Activated T-helper 2 cell treated with anti-CD3 and anti-CD28 coated beads, Interferon-gamma antibody, Interleukin-2, Interleukin-4, amounts not matched to agents 10 μg/mL and 5 μg/mL and 100 μg/mL, durations not matched to agents 14 hours and 24 hours and 36 hours (primary cell): ENCODE measurements at regions of chr9 and their contacts with region 1.

Region 1: GRCh38 chr9:87950765-87951488 is 23.4 kb downstream of the CDK20 start:
- DNase-seq: no peak
- H3K4me3 Mint-ChIP-seq: no peak overlapping the region
- H3K27ac Mint-ChIP-seq: no peak overlapping the region
- H3K4me1 Mint-ChIP-seq: peaks cover 7% of the 10 kb centered on the region
- H3K27me3 Mint-ChIP-seq: peaks cover 32% of the 10 kb centered on the region

Region 2: DNA sequence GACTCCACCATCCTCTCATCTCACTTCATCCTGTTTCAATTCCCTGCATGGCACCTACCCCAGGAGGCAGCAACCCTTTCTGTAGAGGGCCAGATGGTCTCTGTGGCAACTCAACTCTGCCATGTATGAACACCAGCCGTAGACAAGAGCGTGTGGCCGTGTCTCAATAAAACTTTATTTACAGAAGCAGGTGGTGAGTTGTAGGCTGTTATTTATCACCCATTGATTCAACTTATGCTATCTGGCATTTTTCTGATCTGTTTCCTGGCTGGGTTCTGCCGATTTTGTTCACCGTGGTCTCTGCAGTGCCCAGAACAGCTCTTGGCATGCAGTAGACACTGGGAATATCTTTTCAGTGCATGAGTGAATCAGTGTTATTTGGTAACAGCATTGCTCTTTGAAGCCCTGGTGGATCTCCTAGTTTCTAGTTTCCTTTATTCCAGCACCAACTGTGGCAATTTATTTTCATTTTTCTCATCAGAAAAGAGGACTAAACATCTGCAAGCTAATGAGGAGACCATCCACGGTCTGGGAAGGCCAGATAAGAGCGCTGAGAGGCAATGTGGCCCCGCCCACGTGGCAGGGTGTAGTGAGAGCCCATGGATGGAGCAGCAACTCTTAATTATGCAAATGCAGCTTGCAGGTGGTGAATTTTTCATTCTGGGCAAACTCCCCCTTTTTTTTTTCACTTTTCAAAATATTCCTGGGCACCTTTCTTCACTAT is 147.1 kb before region 1 on chr9:
- intact Hi-C with region 1: no loop called
- DNase-seq: no peak
- H3K4me3 Mint-ChIP-seq: no peak overlapping the region
- H3K27ac Mint-ChIP-seq: no peak overlapping the region
- H3K4me1 Mint-ChIP-seq: no peaks in the 10 kb centered on the region
- H3K27me3 Mint-ChIP-seq: no peaks in the 10 kb centered on the region

Region 3: GRCh38 chr9:88578121-88579054 is 627.5 kb after region 1 on chr9:
- intact Hi-C with region 1: loop called (anchors 5 kb)
- DNase-seq: peak; percentile 60
- H3K4me3 Mint-ChIP-seq: peak overlapping the region; percentile 46
- H3K27ac Mint-ChIP-seq: no peak overlapping the region
- H3K4me1 Mint-ChIP-seq: peaks cover 4% of the 10 kb centered on the region
- H3K27me3 Mint-ChIP-seq: peaks cover 22% of the 10 kb centered on the region

Region 4: GRCh38 chr9:88741335-88741734 is 790.4 kb after region 1 on chr9:
- intact Hi-C with region 1: loop called (anchors 5 kb)
- DNase-seq: no peak
- H3K4me3 Mint-ChIP-seq: no peak overlapping the region
- H3K27ac Mint-ChIP-seq: no peak overlapping the region
- H3K4me1 Mint-ChIP-seq: no peaks in the 10 kb centered on the region
- H3K27me3 Mint-ChIP-seq: peaks cover 19% of the 10 kb centered on the region

Region 5: GRCh38 chr9:89000973-89001916 is 1050.3 kb after region 1 on chr9:
- intact Hi-C with region 1: loop called (anchors 5 kb)
- DNase-seq: peak; percentile 65
- H3K4me3 Mint-ChIP-seq: no peak overlapping the region
- H3K27ac Mint-ChIP-seq: no peak overlapping the region
- H3K4me1 Mint-ChIP-seq: peaks cover 2% of the 10 kb centered on the region
- H3K27me3 Mint-ChIP-seq: no peaks in the 10 kb centered on the region